ENCODE measurements at regions of chr22 and their contacts with region 1.

Region 1: GRCh38 chr22:20418211-20418788 is 19.3 kb downstream of the SCARF2 start:
- DNase-seq: peak; percentile 80
- ATAC-seq: peak; percentile 90
- H3K4me3 Mint-ChIP-seq: peak overlapping the region; percentile 51
- H3K27ac Mint-ChIP-seq: no peak overlapping the region
- H3K4me1 Mint-ChIP-seq: peaks cover 3% of the 10 kb centered on the region
- H3K27me3 Mint-ChIP-seq: peaks cover 15% of the 10 kb centered on the region

Region 2: DNA sequence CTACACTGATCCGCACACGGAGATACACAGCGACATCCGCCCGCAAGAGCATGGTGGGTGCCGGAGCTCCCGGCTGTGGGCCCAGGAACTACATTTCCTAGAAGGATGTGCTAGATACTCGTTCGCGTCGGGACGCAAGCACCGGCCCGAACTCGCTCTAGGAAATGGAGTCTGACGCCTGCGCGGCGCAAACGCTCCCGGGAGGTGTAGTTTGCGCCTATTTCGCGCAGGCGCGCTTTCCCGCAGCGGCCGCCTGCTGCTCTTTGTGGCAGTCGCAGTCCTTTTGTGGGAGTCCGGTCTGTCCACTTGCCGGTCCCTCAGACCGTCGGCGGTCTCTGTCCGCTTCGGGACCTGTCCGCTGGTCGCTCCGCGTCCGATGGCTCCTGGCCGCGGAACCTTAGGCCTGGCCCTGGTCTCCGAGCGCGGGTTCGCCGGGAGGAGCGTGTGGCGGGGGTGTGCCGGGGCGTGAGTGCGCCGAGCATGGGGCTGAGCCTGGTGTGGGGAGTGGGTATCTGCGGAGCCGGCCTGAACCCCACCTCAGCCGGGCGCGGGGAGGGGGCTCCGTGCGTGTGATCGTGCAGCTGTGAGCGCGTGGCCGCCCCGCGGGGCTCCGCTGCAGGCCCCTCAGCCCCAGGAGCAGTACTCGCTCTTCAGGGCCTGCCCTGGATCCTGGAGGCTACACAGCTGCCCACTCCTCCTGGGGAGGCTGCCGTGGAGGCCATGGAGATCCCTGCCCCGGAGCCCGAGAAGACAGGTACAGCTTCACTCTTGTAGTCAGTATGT is 24.2 kb before region 1 on chr22 and contains the start of gene ZNF74:
- CTCF ChIA-PET with region 1: interaction called, 14 read pairs
- DNase-seq: peak; percentile 90
- ATAC-seq: peak; percentile 95
- H3K4me3 Mint-ChIP-seq: peak within 1 kb of the TSS; percentile 81
- H3K27ac Mint-ChIP-seq: peak within 1 kb of the TSS; percentile 91
- H3K4me1 Mint-ChIP-seq: peaks cover 22% of the 10 kb centered on the region
- H3K27me3 Mint-ChIP-seq: no peaks in the 10 kb centered on the region
- total RNA-seq, gene ZNF74: 10.0 to 10.9 TPM

Region 3: DNA sequence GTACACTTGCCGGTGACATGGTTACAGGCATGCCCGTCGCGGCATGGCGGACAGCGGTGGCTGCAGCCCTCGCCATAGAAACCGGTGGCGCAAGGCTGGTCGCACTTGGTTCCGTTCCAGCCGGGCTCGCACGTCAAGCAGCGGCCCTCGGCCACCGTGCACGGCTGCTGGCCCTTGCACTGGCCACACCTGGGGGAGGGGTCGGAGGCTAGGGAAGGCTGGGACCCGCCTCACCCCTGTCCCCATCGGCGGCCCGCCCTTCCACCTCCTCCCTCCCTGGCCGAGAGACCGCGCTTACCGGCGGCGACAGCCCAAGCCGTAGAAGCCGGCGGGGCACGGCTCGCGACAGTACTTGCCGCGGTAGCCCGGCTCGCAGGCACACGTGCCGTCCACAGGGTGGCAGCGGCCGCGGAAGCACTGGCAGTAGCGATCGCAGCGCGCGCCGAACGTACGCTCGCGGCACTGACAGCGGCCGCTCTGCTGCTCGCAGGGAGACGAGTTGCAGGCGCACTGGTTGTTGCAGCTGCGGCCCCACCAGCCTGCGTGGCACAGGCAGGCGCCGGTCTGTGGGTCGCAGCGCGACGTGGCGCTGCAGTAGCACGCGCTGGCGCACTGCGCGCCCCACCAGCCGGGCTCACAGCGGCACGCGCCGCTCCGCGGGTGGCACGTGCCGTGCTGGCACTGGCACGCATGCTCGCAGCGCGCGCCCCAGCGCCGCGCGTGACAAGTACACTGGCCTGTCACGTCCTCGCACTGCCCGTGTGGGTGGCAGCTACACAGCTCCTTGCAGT is 12.6 kb after region 1 on chr22:
- CTCF ChIA-PET with region 1: interaction called, 16 read pairs
- DNase-seq: peak; percentile 64
- ATAC-seq: peak; percentile 43
- H3K4me3 Mint-ChIP-seq: peak overlapping the region; percentile 55
- H3K27ac Mint-ChIP-seq: no peak overlapping the region
- H3K4me1 Mint-ChIP-seq: peaks cover 20% of the 10 kb centered on the region
- H3K27me3 Mint-ChIP-seq: peaks cover 73% of the 10 kb centered on the region

Region 4: DNA sequence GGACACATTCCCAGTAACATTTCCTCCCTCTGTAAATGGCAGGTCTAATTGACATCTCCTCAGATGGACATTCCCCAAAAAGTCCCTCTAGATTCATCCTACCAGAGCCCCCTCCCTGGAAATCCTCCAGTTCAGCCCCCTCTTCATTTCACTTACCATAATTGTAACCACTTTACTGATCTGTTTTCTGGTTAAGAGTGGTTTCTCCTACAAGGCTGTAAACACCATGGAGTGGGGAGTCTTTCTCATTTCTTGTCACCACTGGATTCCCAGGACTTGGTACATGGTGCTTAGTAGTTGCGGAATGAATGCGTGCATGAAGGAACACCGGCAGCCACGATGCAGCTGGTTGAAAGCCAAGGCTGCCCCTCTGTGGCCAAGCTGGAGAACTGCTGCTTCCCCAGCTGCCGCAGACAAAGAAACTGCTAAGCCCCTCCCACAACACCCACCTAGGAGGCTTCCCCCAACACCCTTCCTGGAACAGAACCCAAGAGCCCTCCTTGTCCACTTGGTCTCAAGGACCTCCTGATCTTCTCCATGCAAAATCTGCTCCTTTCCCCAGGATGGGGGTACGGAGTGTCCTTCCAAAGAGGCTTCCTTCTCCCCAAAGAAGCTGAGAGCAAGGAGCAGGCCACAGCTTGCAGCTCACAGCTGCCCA is 37.9 kb after region 1 on chr22:
- CTCF ChIA-PET with region 1: interaction called, 84 read pairs
- DNase-seq: peak; percentile 85
- ATAC-seq: peak; percentile 93
- H3K4me3 Mint-ChIP-seq: no peak overlapping the region
- H3K27ac Mint-ChIP-seq: peak overlapping the region; percentile 29
- H3K4me1 Mint-ChIP-seq: peaks cover 10% of the 10 kb centered on the region
- H3K27me3 Mint-ChIP-seq: no peaks in the 10 kb centered on the region

Region 5: GRCh38 chr22:20495861-20496681 is 77.8 kb after region 1 on chr22:
- CTCF ChIA-PET with region 1: interaction called, 13 read pairs
- DNase-seq: peak; percentile 94
- ATAC-seq: peak; percentile 97
- H3K4me3 Mint-ChIP-seq: peak overlapping the region; percentile 85
- H3K27ac Mint-ChIP-seq: peak overlapping the region; percentile 74
- H3K4me1 Mint-ChIP-seq: peaks cover 25% of the 10 kb centered on the region
- H3K27me3 Mint-ChIP-seq: no peaks in the 10 kb centered on the region